GM10248 (cell line): ENCODE measurements at regions of chr6 and their contacts with region 1.

Region 1: GRCh38 chr6:130020907-130021629 is 2.7 kb downstream of the L3MBTL3 start:
- DNase-seq: peak; percentile 65
- CTCF ChIP-seq: peak; percentile 85

Region 2: GRCh38 chr6:129695373-129696027 is 325.6 kb before region 1 on chr6:
- CTCF ChIA-PET with region 1: no interaction called
- POLR2A ChIA-PET with region 1: no interaction called
- DNase-seq: no peak
- CTCF ChIP-seq: no peak

Region 3: DNA sequence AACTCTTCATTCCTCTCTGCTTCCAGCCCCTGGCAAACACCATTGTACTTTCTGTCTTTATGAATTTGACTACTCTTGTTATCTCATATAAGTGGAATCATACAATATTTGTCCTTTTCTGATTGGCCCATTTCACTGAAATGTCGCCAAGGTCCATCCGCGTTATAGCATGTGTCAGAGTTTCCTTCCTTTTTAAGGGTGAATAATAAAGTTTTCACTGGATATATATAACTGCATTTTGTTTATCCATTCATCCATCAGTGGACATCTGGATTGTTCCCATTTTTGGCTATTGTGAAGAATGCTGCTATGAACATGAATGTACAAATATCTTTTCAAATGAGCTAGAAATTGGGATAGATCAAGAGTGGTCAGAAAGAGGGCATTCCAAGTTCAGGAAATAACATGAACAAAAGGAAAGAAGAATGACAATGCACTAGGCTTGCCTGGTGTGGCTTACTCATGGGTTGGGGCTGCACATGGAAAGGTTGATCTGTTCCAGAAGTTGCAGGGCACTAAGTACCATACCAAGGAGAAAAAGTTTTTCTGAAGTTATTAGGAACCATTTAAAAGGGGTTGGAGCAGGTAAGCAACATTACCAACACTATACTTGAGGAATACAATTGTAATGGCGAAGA is 12.7 kb before region 1 on chr6:
- CTCF ChIA-PET with region 1: interaction called, 10 read pairs
- POLR2A ChIA-PET with region 1: no interaction called
- DNase-seq: no peak
- CTCF ChIP-seq: no peak

Region 4: DNA sequence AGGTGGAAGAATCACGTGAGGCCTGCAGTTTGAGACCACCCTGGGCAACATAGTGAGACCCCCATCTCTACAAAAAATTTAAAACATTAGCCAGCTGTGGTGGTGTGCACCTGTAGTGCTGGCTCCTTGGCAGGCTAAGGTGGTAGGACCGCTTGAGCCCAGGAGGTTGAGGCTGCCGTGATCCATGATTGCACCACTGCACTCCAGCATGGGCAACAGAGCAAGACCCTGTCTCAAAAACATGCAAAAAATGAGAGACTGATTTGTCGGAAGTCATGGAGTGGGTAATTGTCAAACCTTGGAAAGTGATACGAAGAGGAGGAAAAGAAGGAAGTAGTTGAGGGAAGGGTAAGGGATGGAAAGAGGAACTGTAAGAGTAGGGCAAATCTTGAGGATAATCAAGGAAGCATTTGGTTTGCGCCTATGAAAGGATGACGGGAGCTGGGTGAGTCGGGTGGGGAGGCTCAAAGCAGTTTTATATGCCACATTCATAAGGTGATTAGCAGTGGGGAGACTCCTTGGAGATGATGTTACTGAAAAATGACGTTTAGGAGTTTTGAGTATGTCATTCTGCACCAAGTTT is 11.8 kb after region 1 on chr6:
- CTCF ChIA-PET with region 1: interaction called, 14 read pairs
- POLR2A ChIA-PET with region 1: no interaction called
- DNase-seq: no peak
- CTCF ChIP-seq: no peak

Region 5: DNA sequence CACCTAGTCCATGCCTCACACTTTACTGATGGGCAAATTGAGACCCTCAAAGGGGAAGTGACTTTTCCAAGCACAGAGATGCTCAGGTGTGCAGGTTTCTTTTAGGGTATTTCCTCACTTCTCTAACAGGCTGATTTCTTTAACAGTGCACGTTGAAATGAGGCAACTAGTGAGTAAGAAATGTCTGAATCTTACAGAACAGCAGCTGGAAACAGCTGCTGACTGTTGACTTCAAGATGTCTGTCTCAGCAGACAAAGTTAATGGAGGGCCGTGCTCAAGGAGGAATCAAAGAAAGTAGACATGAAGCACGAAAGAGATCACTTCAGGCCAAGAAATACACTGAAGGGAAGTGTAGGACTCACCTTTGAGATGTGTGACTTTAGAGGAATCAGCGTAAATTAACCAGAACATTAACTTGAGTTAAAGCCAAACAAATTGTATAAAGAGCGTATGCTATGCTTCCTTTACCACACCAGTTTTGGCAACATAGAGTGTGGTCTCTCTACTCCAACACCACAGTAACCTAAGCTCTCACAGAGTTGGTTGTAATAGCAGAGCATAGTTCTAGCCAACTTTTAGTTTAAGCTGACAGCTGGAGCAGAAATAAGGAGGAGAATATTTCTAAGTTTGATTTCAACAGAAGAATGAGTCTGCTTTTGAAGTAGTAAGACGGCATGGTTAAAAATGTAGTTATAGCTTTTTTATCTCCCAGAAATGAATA is 140.8 kb after region 1 on chr6:
- CTCF ChIA-PET with region 1: no interaction called
- POLR2A ChIA-PET with region 1: no interaction called
- DNase-seq: no peak
- CTCF ChIP-seq: no peak